ENCODE measurements at regions of chr2 and their contacts with region 1.

Region 1: GRCh38 chr2:102473020-102473419 is at the start of gene SLC9A4:
- H3K4me3 Mint-ChIP-seq: no peak within 1 kb of the TSS
- H3K27ac Mint-ChIP-seq: no peak within 1 kb of the TSS
- H3K4me1 Mint-ChIP-seq: no peaks in the 10 kb centered on the region
- H3K27me3 Mint-ChIP-seq: peaks cover 23% of the 10 kb centered on the region

Region 2: GRCh38 chr2:102520028-102520427 is 47.0 kb after region 1 on chr2:
- intact Hi-C with region 1: loop called (anchors 5 kb)
- H3K4me3 Mint-ChIP-seq: no peak overlapping the region
- H3K27ac Mint-ChIP-seq: no peak overlapping the region
- H3K4me1 Mint-ChIP-seq: no peaks in the 10 kb centered on the region
- H3K27me3 Mint-ChIP-seq: no peaks in the 10 kb centered on the region

Region 3: DNA sequence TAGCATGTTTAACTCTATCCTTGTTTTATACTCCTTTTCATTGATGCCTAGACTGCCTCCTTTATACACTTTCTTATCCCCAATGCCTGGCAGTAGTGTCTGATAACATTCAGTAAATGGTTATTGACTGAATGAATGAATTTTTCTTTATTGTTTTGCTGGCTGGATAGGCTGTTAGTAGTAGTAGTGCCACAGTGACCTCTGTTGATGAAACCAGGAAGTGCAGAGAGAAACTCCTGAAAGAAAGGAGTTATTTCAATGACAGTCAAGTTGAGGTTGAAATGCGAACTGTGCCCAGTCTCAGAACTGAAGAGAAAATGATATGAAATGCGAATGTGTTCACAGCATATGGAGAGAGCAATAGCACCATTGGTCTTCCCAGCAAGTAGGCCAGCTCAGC is 119.6 kb after region 1 on chr2:
- intact Hi-C with region 1: loop called (anchors 2 kb)
- H3K4me3 Mint-ChIP-seq: no peak overlapping the region
- H3K27ac Mint-ChIP-seq: no peak overlapping the region
- H3K4me1 Mint-ChIP-seq: no peaks in the 10 kb centered on the region
- H3K27me3 Mint-ChIP-seq: peaks cover 20% of the 10 kb centered on the region

Region 4: DNA sequence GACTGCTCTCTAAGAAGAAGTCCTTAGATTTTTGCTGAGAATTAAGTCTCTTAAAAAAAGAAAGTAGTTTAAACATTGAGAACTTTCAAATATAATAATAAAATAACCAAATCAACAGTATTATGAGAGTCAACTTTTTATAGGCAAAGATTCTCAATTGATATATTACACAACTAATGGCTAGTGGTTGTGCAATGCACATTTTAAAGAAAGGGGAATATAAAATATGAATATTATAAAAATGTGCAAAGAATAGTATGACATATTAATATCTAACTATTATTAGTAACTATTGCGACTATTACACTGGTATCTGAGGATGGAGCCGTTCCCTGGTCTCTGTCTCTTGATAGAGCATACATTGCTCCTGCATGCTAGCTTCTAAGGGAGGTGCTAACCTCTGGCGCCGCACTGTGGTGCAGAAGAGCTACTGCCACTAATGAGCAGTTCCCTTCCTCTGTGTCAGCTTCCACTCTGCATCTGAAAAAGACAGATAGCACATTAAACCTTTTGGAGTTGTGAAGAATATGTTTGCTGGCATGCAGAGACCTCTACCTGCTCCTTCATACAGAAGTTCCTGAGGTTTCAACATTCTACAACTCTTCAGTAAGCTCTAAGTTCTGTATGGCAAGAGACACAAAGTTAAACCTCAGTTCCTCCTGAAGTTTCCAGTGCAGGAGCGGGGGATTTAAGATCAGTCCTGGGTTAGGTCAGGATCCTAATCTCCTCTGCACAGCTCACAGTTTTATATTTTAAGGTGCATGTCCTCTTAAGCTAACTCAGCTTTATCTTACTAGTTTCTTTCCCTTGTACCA is 142.8 kb after region 1 on chr2:
- intact Hi-C with region 1: loop called (anchors 1 kb)
- H3K4me3 Mint-ChIP-seq: no peak overlapping the region
- H3K27ac Mint-ChIP-seq: no peak overlapping the region
- H3K4me1 Mint-ChIP-seq: peaks cover 12% of the 10 kb centered on the region
- H3K27me3 Mint-ChIP-seq: peaks cover 63% of the 10 kb centered on the region

Region 5: DNA sequence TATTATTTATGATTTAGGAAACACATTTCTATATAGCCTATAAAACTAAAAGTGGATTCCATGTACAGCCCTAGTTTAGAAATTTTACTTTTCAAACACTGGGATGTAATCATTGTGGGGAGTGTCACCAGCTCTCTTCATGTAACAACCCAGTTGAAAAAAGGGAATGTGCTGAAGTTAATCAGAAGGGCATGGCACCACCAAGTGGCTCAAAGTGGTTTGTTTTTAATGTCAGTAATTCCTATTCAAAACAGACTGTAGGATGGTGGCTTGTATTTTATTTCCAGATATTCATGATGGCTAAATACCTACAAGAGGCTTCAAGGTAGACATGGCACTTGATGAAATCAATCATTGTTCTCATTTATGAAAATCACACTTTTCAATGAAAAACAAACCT is 230.7 kb after region 1 on chr2:
- intact Hi-C with region 1: loop called (anchors 5 kb)
- H3K4me3 Mint-ChIP-seq: no peak overlapping the region
- H3K27ac Mint-ChIP-seq: no peak overlapping the region
- H3K4me1 Mint-ChIP-seq: no peaks in the 10 kb centered on the region
- H3K27me3 Mint-ChIP-seq: peaks cover 19% of the 10 kb centered on the region

Measured in dendritic cell treated with granulocyte-macrophage colony-stimulating factor and Interleukin-4, amounts not matched to agents 40 ng/mL and 50 ng/mL, for 4 days (primary cell).